Panc1 (cell line): ENCODE measurements at regions of chr6 and their contacts with region 1.

Region 1: DNA sequence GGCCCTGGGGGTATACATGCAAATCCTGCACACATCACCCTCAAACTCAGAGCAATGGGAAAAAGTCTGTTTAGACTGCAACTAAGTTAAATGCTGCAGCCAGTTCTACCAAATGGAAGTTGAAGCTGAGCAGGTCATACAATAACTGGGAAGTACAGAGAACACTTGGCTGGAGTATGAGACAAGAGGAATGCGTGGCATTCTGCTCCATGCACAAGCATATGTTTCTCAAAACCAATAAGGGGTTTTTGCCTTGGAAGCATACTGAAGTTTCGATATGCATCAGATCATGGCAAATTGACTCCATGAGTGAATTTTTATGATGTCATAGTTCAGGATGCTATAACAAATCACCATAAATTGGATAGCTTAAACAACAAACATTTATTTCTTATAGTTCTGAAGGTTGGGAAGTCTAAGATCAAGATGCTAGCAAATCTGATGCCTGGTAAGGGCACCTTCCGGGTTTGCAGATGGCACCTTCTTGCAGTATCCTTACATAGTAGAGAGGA is 193.8 kb downstream of the COL12A1 start:
- DNase-seq: no peak
- ATAC-seq: no peak
- H3K4me3 ChIP-seq: no peak overlapping the region
- H3K27ac ChIP-seq: no peak overlapping the region
- H3K4me1 ChIP-seq: no peaks in the 10 kb centered on the region
- H3K27me3 ChIP-seq: no peaks in the 10 kb centered on the region
- CTCF ChIP-seq: no peak

Region 2: DNA sequence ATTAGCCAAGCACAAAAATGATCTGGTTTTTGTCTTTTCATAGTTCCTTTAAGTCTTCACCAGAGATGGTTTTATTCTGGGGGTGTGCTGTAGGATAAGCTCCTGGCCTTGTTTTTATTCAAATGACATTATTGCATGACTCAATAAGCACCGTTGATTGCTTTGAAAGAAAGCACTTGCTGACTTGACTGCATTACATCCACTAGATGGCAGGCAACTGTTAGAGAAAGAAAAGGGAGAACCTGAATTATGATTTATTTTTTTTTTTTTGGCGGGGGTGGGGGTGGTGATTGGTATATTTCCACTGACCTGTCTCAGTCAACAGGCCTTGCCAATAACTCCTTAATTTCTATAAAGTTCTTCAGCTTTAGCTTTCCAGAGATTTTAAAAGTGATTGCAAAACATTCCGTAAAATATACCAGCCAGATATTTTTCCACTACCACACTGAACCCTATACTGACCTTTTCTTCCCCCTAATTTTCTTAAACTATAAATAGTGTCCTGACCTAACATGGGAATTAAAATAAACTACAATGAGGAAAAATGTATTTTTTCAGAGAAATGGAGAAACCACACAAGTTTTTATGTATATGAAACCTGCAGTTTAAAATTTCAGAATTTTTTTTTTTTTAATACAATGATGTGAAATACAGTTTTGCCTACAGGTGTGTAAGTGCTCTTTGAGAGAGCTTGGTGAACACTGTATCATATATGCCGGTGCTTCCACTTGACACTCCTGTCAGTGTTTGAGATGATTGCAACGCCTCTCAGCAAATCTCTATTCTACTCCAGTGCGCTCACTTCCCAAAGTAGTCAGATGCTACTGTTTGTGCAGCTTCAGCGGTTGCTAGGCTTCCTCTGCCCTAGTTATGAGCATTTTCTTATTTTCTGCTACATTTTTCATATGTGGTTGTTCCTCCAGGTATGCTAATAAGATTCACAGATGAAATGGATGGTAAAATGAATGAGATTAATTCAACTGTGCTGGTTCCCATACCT is 1041.8 kb before region 1 on chr6:
- CTCF ChIA-PET with region 1: interaction called, 10 read pairs
- POLR2A ChIA-PET with region 1: no interaction called
- in situ Hi-C with region 1: no loop called
- intact Hi-C with region 1: no loop called
- DNase-seq: peak; percentile 35
- ATAC-seq: peak; percentile 81
- H3K4me3 ChIP-seq: no peak overlapping the region
- H3K27ac ChIP-seq: peak overlapping the region; percentile 45; the same call in 1 of the 2 replicates
- H3K4me1 ChIP-seq: no peaks in the 10 kb centered on the region
- H3K27me3 ChIP-seq: no peaks in the 10 kb centered on the region
- CTCF ChIP-seq: peak; percentile 77; the same call in 1 of the 2 replicates

Region 3: GRCh38 chr6:74991573-74992332 is 20.3 kb before region 1 on chr6:
- CTCF ChIA-PET with region 1: no interaction called
- POLR2A ChIA-PET with region 1: no interaction called
- in situ Hi-C with region 1: no loop called
- intact Hi-C with region 1: no loop called
- DNase-seq: no peak
- ATAC-seq: no peak
- H3K4me3 ChIP-seq: no peak overlapping the region
- H3K27ac ChIP-seq: no peak overlapping the region
- H3K4me1 ChIP-seq: no peaks in the 10 kb centered on the region
- H3K27me3 ChIP-seq: no peaks in the 10 kb centered on the region
- CTCF ChIP-seq: no peak